AG04450 (cell line): ENCODE measurements at regions of chr10 and their contacts with region 1.

Region 1: GRCh38 chr10:88932539-88933256 is 19.9 kb downstream of the ACTA2 start:
- DNase-seq: peak; percentile 62
- H3K4me3 ChIP-seq: no peak overlapping the region
- H3K27ac ChIP-seq: peak overlapping the region; percentile 49
- H3K27me3 ChIP-seq: no peaks in the 10 kb centered on the region
- CTCF ChIP-seq: peak; percentile 95

Region 2: DNA sequence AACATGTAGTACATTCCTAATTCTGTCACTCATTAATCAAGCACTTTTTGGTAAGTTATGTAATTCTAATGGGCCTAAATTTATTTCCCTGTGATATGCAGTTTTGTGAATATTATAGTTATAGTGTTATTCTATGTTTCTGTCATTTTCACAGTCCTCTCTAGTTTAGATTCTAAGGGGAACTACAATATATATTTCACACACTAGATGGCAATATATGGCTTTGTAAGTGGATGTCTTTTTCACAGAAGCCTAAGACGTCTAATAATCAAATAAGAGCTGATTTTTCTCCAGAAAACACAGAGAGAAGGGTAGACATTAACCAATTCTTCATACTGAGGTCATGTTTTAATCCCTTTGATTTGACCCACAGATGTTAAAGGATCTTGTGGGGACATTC is 367.6 kb before region 1 on chr10:
- CTCF ChIA-PET with region 1: interaction called, 64 read pairs
- POLR2A ChIA-PET with region 1: interaction called, 7 read pairs
- DNase-seq: no peak
- H3K4me3 ChIP-seq: no peak overlapping the region
- H3K27ac ChIP-seq: no peak overlapping the region
- H3K27me3 ChIP-seq: no peaks in the 10 kb centered on the region
- CTCF ChIP-seq: peak; percentile 46

Region 3: GRCh38 chr10:88851706-88852105 is 81.0 kb before region 1 on chr10 and contains the start of gene ANKRD22:
- CTCF ChIA-PET with region 1: interaction called, 60 read pairs
- POLR2A ChIA-PET with region 1: no interaction called
- DNase-seq: no peak
- H3K4me3 ChIP-seq: no peak within 1 kb of the TSS
- H3K27ac ChIP-seq: no peak within 1 kb of the TSS
- H3K27me3 ChIP-seq: no peaks in the 10 kb centered on the region
- CTCF ChIP-seq: no peak
- polyA plus RNA-seq, gene ANKRD22: 0.05 TPM in 1 of 2 replicates, not detected in the other

Region 4: GRCh38 chr10:88889559-88890337 is 43.0 kb before region 1 on chr10:
- CTCF ChIA-PET with region 1: interaction called, 44 read pairs
- POLR2A ChIA-PET with region 1: interaction called, 3 read pairs
- DNase-seq: no peak
- H3K4me3 ChIP-seq: no peak overlapping the region
- H3K27ac ChIP-seq: no peak overlapping the region
- H3K27me3 ChIP-seq: no peaks in the 10 kb centered on the region
- CTCF ChIP-seq: no peak

Region 5: GRCh38 chr10:88915781-88916180 is 16.9 kb before region 1 on chr10:
- CTCF ChIA-PET with region 1: interaction called, 36 read pairs
- POLR2A ChIA-PET with region 1: interaction called, 3 read pairs
- DNase-seq: no peak
- H3K4me3 ChIP-seq: no peak overlapping the region
- H3K27ac ChIP-seq: no peak overlapping the region
- H3K27me3 ChIP-seq: no peaks in the 10 kb centered on the region
- CTCF ChIP-seq: no peak

Region 6: DNA sequence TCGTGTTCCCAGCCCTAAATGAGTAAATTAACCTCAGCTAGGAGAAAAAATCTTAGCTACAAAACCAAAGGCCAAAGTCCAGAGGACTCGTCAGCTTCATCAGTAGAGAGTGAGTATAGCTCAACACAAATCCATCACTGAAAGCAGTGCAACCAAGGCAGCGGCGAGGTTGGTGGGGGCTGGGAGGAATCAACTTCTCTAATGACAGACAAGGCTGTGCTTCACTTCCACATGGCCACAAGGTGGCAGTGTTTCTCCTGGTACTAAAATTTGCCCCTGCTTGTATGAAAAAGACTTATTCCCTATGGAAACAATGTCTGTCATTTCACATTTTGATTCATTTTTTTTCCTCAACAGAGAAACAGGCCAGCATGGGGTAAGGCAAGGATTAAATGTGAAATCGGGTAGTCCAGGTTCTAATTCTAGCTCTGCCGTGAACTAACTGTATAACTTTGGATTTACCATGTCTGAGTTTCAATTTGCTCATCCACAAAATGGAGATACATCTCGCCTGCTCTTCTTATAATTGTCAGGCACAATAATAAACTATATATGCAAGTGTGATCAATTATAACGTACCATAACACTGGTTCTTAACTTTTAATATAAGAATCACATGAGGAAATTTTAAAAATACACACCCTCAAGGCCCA is 97.2 kb after region 1 on chr10:
- CTCF ChIA-PET with region 1: interaction called, 14 read pairs
- POLR2A ChIA-PET with region 1: no interaction called
- DNase-seq: peak; percentile 59
- H3K4me3 ChIP-seq: no peak overlapping the region
- H3K27ac ChIP-seq: no peak overlapping the region
- H3K27me3 ChIP-seq: no peaks in the 10 kb centered on the region
- CTCF ChIP-seq: peak; percentile 85